CD4-positive, alpha-beta T cell (primary cell): ENCODE measurements at regions of chr19 and their contacts with region 1.

Region 1: GRCh38 chr19:57578487-57579205 is at the start of gene ZNF416:
- DNase-seq: peak; percentile 88 to 99 (median 94)
- ATAC-seq: peak; percentile 96
- H3K4me3 ChIP-seq: peak within 1 kb of the TSS; percentile 81
- H3K4me3 Mint-ChIP-seq: peak within 1 kb of the TSS; percentile 94
- H3K27ac ChIP-seq: peak within 1 kb of the TSS; percentile 25 to 60
- H3K27ac Mint-ChIP-seq: peak within 1 kb of the TSS; percentile 79
- H3K4me1 ChIP-seq: peaks cover 29% of the 10 kb centered on the region
- H3K4me1 Mint-ChIP-seq: peaks cover 28% of the 10 kb centered on the region
- H3K27me3 ChIP-seq: no peaks in the 10 kb centered on the region
- H3K27me3 Mint-ChIP-seq: no peaks in the 10 kb centered on the region
- CTCF ChIP-seq: no peak
- total RNA-seq, gene ZNF416: 5.2 to 5.7 TPM

Region 2: DNA sequence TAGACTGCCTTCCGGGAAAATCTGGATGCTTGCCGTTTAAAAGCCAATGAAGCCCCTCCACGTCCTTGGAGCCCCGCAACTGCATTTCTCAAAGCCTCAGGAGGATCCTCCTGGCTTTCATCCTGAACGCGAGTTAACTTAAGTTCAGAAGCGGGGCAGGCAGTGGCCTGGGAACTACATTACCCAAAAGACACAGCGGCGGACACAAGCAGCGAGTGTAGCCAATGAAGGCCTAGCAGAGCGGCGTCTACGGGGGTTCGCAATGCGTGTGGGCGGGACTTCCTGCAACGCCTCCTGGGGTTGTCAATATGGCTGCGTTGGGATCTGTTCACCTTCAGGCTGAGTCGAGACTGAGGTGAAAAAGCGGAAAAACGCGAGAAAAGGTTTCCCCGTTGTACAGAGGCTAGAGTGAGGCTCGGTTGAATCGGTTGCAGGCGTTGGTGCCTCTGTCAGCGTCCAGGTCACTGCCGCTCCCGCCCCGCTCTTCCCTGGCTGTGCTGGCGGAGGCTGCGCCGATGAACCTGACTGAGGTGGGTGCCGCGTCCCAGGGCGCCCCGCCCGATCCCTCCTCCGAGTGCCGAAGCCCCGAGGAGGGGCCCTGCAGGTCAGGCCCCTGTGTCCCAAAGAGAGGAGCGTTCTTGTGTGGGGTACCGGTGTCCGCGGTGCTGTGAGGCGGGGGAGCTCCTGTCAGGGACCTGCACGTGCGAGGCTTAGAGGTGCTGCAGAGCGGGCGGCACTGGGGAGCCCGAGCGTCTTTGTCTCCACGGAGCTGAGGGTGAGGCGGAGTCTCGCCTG is 167.6 kb before region 1 on chr19 and contains the start of gene ZNF17:
- CTCF ChIA-PET with region 1: no interaction called
- POLR2A ChIA-PET with region 1: no interaction called
- intact Hi-C with region 1: no loop called
- DNase-seq: peak; percentile 81 to 96 (median 90)
- ATAC-seq: peak; percentile 99
- H3K4me3 ChIP-seq: peak within 1 kb of the TSS; percentile 79
- H3K4me3 Mint-ChIP-seq: peak within 1 kb of the TSS; percentile 97
- H3K27ac ChIP-seq: peak within 1 kb of the TSS; percentile 58 to 68
- H3K27ac Mint-ChIP-seq: peak within 1 kb of the TSS; percentile 91
- H3K4me1 ChIP-seq: peaks cover 20% of the 10 kb centered on the region
- H3K4me1 Mint-ChIP-seq: peaks cover 39% of the 10 kb centered on the region
- H3K27me3 ChIP-seq: no peaks in the 10 kb centered on the region
- H3K27me3 Mint-ChIP-seq: no peaks in the 10 kb centered on the region
- CTCF ChIP-seq: no peak
- total RNA-seq, gene ZNF17: 9.3 to 10.0 TPM

Region 3: DNA sequence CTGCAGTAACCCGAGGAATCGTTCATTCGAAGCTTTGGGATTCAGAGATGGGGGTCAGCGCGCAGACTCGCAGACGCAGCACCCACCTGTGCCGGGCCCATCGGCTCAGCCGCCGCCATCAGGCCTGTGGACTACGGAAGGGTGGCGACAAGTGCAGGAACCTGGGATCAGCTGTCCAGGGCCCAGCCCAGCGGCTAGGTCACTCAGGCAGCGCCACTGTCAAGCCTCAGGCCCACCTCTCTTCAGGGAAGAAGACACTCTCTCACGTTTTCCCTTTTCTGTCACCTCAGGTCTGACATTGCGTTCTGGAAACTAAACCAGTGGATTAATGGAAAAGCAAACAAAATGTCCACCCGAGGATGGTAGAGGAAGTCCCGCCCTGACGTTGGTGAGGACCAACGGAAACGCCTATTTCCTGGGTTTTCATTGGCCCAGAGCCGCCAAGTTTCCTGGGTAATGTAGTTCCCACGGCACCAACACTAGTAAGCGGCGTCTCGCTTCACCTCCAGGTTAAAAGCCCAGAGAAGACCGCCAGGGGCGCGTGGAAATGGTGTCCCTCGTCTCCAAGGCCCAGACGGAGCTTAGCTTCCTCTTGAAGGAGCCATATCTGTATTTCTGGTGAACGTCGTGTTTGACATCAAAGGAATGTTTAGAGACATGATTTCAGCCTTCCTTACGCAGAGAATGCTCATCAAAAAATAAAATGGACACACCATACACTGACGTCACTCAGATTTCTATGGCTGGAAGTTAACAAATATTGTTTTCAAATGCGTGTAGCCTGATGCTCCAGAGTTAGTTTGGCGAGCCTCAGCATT is 101.2 kb before region 1 on chr19 and contains the start of gene ZNF772:
- CTCF ChIA-PET with region 1: interaction called, 6 read pairs
- POLR2A ChIA-PET with region 1: interaction called, 4 read pairs
- intact Hi-C with region 1: loop called in 1 of 2 experiments (anchors 2 kb)
- DNase-seq: peak; percentile 73 to 95 (median 85)
- ATAC-seq: peak; percentile 98
- H3K4me3 ChIP-seq: peak within 1 kb of the TSS; percentile 85
- H3K4me3 Mint-ChIP-seq: peak within 1 kb of the TSS; percentile 90
- H3K27ac ChIP-seq: peak within 1 kb of the TSS; percentile 46 to 54
- H3K27ac Mint-ChIP-seq: peak within 1 kb of the TSS; percentile 77
- H3K4me1 ChIP-seq: peaks cover 16% of the 10 kb centered on the region
- H3K4me1 Mint-ChIP-seq: peaks cover 19% of the 10 kb centered on the region
- H3K27me3 ChIP-seq: no peaks in the 10 kb centered on the region
- H3K27me3 Mint-ChIP-seq: no peaks in the 10 kb centered on the region
- CTCF ChIP-seq: peak; percentile 33
- total RNA-seq, gene ZNF772: 2.5 to 3.2 TPM

Region 4: GRCh38 chr19:57559404-57560025 is 19.1 kb before region 1 on chr19 and contains the start of gene ZNF550:
- CTCF ChIA-PET with region 1: interaction called, 4 read pairs
- POLR2A ChIA-PET with region 1: interaction called, 6 read pairs
- intact Hi-C with region 1: loop called (anchors 1 kb)
- DNase-seq: peak; percentile 77 to 93 (median 86)
- ATAC-seq: peak; percentile 98
- H3K4me3 ChIP-seq: peak within 1 kb of the TSS; percentile 94
- H3K4me3 Mint-ChIP-seq: peak within 1 kb of the TSS; percentile 95
- H3K27ac ChIP-seq: peak within 1 kb of the TSS; percentile 44 to 45
- H3K27ac Mint-ChIP-seq: peak within 1 kb of the TSS; percentile 64
- H3K4me1 ChIP-seq: peaks cover 25% of the 10 kb centered on the region
- H3K4me1 Mint-ChIP-seq: peaks cover 34% of the 10 kb centered on the region
- H3K27me3 ChIP-seq: peaks cover 0 to 5% of the 10 kb centered on the region in 2 experiments
- H3K27me3 Mint-ChIP-seq: peaks cover 9% of the 10 kb centered on the region
- CTCF ChIP-seq: no peak
- total RNA-seq, gene ZNF550: 15.7 to 20.0 TPM

Region 5: DNA sequence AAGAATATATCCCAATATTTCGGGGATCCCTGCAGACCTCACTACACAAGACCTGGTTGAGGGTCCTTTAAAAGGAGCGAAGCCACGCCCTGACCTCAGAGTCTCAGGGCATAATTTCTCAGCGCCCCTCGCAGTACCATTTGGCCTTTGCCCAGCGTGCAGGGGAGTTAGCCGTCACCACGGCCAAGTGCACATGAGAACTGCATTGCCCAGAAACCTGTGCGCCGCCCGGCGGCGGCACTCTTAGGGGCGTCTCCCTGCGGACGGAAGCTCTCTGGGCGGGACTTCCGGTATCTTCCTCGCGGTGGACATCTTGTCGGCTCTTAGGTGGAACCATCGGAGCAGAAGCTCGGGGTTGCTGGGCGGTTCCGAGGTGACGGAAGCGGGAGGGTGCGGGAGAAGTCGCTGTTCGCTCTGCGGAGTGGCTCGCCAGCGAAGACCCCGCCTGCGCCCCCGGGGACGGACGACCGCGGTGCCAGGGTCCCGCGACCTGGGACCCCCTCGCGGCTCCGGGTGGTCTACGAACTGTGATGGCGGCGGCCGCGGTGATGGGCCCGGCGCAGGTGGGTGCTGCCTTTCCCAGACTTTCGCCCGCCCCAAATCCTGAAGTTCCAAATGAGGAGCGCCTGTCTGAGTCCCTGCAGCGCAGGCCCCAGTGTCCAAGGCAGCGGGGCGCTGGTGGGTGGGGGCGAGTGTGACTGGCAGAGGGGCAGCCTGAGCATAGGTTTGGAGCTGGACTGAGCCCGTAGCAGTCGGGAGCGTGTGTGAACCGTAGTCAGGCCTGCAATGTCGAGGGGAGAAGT is 35.5 kb after region 1 on chr19 and contains the start of gene ZNF134:
- CTCF ChIA-PET with region 1: interaction called, 5 read pairs
- POLR2A ChIA-PET with region 1: interaction called, 6 read pairs
- intact Hi-C with region 1: loop called in 1 of 2 experiments (anchors 2 kb)
- DNase-seq: peak; percentile 82 to 96 (median 88)
- ATAC-seq: peak; percentile 99
- H3K4me3 ChIP-seq: peak within 1 kb of the TSS; percentile 94
- H3K4me3 Mint-ChIP-seq: peak within 1 kb of the TSS; percentile 95
- H3K27ac ChIP-seq: peak within 1 kb of the TSS; percentile 26 to 50
- H3K27ac Mint-ChIP-seq: peak within 1 kb of the TSS; percentile 82
- H3K4me1 ChIP-seq: peaks cover 26% of the 10 kb centered on the region
- H3K4me1 Mint-ChIP-seq: peaks cover 36% of the 10 kb centered on the region
- H3K27me3 ChIP-seq: no peaks in the 10 kb centered on the region
- H3K27me3 Mint-ChIP-seq: no peaks in the 10 kb centered on the region
- CTCF ChIP-seq: peak; percentile 25
- total RNA-seq, gene ZNF134: 24.6 to 25.7 TPM

Region 6: DNA sequence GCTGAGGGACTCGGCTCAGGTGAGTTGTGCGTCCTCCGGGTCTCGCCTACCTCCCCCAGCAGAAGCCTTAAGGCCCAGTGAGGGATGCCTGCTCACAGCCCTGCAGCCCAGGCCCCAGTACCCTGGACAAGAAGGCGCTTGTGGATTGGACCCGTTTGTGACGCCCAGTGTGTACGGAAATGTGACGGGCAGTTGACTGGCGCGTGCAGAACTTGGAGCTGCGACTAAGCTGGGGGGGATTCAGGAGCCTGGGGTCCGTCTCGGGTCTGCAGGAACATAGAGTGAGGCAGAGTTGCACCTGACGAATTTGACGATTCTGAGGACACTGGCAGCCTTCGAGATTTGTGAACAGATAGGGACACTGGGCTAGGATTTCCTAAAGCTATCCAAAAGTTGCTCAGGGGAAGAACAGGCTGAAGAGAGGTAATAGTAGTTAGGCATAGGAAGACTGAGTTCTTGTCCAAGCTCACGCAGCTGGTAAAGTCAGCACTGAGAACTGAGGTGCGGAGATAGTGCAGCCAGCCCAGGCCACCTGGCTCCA is 103.7 kb after region 1 on chr19:
- CTCF ChIA-PET with region 1: no interaction called
- POLR2A ChIA-PET with region 1: no interaction called
- intact Hi-C with region 1: loop called in 1 of 2 experiments (anchors 5 kb)
- DNase-seq: no peak
- ATAC-seq: no peak
- H3K4me3 ChIP-seq: peak overlapping the region; percentile 81
- H3K4me3 Mint-ChIP-seq: peak overlapping the region; percentile 98
- H3K27ac ChIP-seq: peak overlapping the region; percentile 29 to 55
- H3K27ac Mint-ChIP-seq: peak overlapping the region; percentile 93
- H3K4me1 ChIP-seq: peaks cover 26% of the 10 kb centered on the region
- H3K4me1 Mint-ChIP-seq: peaks cover 43% of the 10 kb centered on the region
- H3K27me3 ChIP-seq: peaks cover 4 to 8% of the 10 kb centered on the region in 2 experiments
- H3K27me3 Mint-ChIP-seq: peaks cover 14% of the 10 kb centered on the region
- CTCF ChIP-seq: no peak